ENCODE measurements at regions of chr3 and their contacts with region 1.

Region 1: DNA sequence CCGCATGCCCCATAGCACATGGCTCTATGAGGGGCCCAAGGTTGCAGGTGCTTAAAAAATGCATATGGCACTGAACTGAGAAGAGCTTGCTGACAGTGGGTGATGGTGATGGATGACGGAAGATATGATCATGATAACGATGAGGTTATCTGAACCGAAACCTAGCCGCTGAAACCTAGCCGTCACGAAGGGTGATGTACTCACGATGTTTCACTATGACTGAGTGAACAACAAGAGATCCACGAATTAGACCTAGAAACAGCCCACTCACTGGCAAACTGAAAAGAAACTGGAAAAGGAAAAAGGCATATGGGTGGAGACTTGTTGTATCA is 57.6 kb upstream of the BCL6 start:
- DNase-seq: peak; percentile 78
- H3K4me3 Mint-ChIP-seq: peak overlapping the region; percentile 65
- H3K27ac Mint-ChIP-seq: peak overlapping the region; percentile 90
- H3K4me1 Mint-ChIP-seq: peaks cover 96% of the 10 kb centered on the region
- H3K27me3 Mint-ChIP-seq: no peaks in the 10 kb centered on the region

Region 2: DNA sequence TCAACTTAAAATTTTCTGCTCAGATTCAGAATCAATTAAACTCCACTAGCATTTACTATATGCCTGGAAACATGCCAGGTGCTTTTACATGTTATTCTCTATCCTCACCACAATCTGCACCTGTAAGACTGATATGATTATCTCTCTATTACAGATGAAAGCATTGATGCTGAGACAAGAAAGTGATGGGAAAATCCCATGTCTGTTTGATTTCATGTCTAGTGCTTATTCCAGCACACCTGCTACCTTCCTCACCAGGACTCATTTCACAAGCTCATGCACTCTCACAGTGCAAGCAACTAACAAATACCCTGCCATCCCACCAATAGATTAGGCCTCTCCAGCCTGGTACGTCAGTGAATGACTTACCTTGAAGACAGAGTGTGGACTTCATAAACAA is 32.7 kb before region 1 on chr3:
- intact Hi-C with region 1: loop called (anchors 1 kb)
- DNase-seq: no peak
- H3K4me3 Mint-ChIP-seq: peak overlapping the region; percentile 12
- H3K27ac Mint-ChIP-seq: peak overlapping the region; percentile 16
- H3K4me1 Mint-ChIP-seq: peaks cover 56% of the 10 kb centered on the region
- H3K27me3 Mint-ChIP-seq: peaks cover 1% of the 10 kb centered on the region

Region 3: GRCh38 chr3:187833799-187834578 is 31.1 kb after region 1 on chr3:
- intact Hi-C with region 1: loop called (anchors 1 kb)
- DNase-seq: no peak
- H3K4me3 Mint-ChIP-seq: no peak overlapping the region
- H3K27ac Mint-ChIP-seq: peak overlapping the region; percentile 26
- H3K4me1 Mint-ChIP-seq: peaks cover 42% of the 10 kb centered on the region
- H3K27me3 Mint-ChIP-seq: no peaks in the 10 kb centered on the region

Region 4: DNA sequence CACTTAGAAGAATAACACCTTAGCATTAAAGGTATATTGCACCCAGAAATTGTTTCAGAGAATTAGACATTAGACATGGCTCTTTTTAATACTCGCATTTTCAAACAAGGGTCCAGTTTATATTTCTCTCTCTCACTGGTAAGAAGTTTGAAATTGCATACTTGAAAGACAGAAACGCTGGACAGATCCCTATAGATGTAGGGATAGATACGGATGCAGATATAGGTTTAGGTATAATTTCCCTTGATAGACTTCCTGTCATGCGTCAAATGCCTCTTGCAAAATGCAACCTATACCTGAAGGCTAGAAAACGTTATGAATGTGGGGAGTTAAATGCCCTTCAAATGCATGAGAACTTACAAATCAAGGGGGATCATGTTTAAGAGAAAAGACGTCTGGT is 41.8 kb after region 1 on chr3:
- intact Hi-C with region 1: no loop called
- DNase-seq: no peak
- H3K4me3 Mint-ChIP-seq: no peak overlapping the region
- H3K27ac Mint-ChIP-seq: no peak overlapping the region
- H3K4me1 Mint-ChIP-seq: peaks cover 4% of the 10 kb centered on the region
- H3K27me3 Mint-ChIP-seq: no peaks in the 10 kb centered on the region

Region 5: GRCh38 chr3:188123170-188123905 is 320.4 kb after region 1 on chr3:
- intact Hi-C with region 1: loop called (anchors 1 kb)
- DNase-seq: no peak
- H3K4me3 Mint-ChIP-seq: no peak overlapping the region
- H3K27ac Mint-ChIP-seq: peak overlapping the region; percentile 7
- H3K4me1 Mint-ChIP-seq: peaks cover 17% of the 10 kb centered on the region
- H3K27me3 Mint-ChIP-seq: peaks cover 1% of the 10 kb centered on the region

Region 6: DNA sequence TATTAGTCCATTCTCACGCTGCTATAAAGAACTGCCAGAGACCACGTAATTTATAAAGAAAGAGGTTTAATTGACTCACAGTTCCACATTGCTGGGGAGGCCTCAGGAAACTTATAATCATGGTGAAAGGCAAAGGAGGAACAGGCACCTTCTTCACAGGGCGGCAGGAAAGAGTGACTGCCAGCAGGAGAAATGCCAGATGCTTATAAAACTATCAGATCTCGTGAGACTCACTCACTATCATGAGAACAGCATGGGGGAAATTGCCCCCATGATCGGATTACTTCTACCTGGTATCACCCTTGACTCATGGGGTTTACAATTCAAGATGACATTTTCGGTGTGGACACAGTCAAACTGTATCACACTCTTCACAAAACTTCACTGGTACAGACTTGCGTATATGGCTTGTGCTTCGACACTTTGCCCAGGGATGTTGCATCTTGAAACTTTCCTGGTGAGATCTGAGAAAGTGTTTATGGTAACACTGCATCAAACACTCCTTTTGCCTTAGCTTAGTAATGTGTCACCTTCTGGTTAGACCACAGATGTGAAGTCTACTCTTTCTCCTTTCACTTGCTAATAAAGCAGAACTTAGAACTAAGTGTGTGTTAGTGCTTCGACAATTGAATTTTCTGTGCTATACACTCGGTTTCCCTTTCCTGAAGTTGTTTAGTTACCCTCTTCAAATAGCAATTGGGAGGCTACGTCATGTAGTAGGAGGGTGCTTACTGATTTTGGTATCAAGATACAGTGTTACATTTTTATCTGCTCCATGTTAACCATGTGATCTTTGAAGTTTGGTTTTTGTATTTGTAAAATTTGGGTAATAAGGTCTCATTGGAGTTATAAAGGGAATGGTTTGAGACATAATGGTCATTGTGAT is 536.8 kb after region 1 on chr3:
- intact Hi-C with region 1: loop called (anchors 1 kb)
- DNase-seq: peak; percentile 39
- H3K4me3 Mint-ChIP-seq: peak overlapping the region; percentile 63
- H3K27ac Mint-ChIP-seq: peak overlapping the region; percentile 86
- H3K4me1 Mint-ChIP-seq: peaks cover 37% of the 10 kb centered on the region
- H3K27me3 Mint-ChIP-seq: peaks cover 24% of the 10 kb centered on the region

Region 7: GRCh38 chr3:188788621-188789081 is 985.8 kb after region 1 on chr3:
- intact Hi-C with region 1: loop called (anchors 1 kb)
- DNase-seq: peak; percentile 49
- H3K4me3 Mint-ChIP-seq: no peak overlapping the region
- H3K27ac Mint-ChIP-seq: no peak overlapping the region
- H3K4me1 Mint-ChIP-seq: peaks cover 6% of the 10 kb centered on the region
- H3K27me3 Mint-ChIP-seq: peaks cover 8% of the 10 kb centered on the region

Region 8: DNA sequence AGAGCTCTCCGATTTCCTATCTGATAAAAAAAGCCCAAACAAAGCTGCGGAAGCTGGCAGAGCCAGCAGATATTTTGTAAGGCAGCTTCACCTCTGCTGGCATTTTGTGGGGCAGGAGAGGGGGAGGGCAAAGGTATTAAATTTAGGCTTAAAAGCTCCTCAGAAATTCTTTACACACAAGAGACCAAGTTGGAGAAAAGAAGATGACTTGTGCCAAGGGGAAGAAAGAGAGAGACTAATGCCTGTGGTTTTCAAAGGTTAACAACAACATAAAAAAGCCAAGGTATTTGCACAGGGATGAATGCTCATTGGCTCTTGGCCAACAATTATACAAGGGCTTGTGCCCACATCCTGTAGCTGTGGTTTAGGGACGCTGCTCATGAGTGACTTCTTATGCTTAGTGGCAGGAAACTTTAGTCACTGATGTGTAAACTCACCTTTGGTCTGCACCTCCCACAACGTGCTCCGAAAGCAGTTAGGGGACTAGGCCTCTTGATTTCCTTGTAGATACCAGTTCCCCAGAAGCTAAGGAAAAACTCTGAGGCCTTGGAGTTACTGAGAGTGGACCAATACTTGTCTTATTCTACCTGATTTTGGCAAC is 1521.7 kb after region 1 on chr3:
- intact Hi-C with region 1: loop called (anchors 10 kb)
- DNase-seq: peak; percentile 85
- H3K4me3 Mint-ChIP-seq: peak overlapping the region; percentile 83
- H3K27ac Mint-ChIP-seq: peak overlapping the region; percentile 99
- H3K4me1 Mint-ChIP-seq: peaks cover 72% of the 10 kb centered on the region
- H3K27me3 Mint-ChIP-seq: peaks cover 3% of the 10 kb centered on the region

Measured in activated T-helper 1 cell treated with anti-CD3 and anti-CD28 coated beads, Interleukin-12 subunit alpha, Interleukin-12 subunit beta, Interleukin-2, Interleukin-4 antibody, amounts not matched to agents 30 ng/mL and 10 ng/mL and 1 ng/mL, durations not matched to agents 14 hours and 24 hours and 36 hours (primary cell).